GM12878 (cell line): ENCODE measurements at regions of chr2 and their contacts with region 1.

Region 1: DNA sequence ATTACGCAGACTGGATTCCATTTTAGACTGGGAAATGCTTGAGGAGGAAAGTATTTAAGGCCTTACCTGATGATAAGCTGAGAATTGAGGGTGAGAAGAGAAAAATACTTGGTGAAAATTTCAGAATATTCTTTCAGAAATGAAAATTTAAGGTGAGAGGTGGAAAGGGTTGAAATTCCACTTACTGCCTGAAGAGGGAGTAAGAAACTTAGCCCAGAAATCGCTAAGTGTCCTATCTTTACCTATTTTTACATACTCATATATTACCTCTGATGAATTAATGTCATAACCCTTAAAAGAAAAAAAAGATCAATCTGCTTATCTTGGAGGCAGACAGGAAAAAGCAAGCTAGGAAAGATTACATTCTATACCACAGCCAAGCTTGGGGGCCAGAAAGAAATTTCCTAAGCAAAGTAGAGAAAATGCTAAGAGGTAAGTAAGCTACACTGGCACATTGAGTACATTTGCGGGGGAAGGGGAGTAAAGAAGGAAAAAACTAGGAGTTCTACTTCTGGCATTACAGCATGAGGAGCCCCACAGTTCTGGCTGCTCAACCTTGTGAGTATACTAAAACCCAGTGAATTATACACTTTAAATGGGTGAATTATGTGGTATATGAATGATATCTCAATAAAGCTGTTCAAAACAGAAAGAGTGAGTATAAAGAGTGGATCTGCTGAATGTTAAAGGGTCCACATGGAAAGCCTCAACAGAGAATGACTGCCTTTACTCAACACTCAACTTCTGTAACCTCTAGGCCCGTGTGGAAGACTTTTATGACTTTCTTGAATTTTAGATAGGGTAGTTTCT is 33.8 kb downstream of the SMC6 start:
- DNase-seq: no peak
- ATAC-seq: peak; percentile 67
- H3K4me3 ChIP-seq: no peak overlapping the region
- H3K27ac ChIP-seq: no peak overlapping the region
- H3K4me1 ChIP-seq: no peaks in the 10 kb centered on the region
- H3K27me3 ChIP-seq: no peaks in the 10 kb centered on the region
- CTCF ChIP-seq: peak; percentile 59 to 78 (median 75)
- EP300 ChIP-seq: no peak
- POLR2A ChIP-seq: no peak
- RAD21 ChIP-seq: peak; percentile 74

Region 2: DNA sequence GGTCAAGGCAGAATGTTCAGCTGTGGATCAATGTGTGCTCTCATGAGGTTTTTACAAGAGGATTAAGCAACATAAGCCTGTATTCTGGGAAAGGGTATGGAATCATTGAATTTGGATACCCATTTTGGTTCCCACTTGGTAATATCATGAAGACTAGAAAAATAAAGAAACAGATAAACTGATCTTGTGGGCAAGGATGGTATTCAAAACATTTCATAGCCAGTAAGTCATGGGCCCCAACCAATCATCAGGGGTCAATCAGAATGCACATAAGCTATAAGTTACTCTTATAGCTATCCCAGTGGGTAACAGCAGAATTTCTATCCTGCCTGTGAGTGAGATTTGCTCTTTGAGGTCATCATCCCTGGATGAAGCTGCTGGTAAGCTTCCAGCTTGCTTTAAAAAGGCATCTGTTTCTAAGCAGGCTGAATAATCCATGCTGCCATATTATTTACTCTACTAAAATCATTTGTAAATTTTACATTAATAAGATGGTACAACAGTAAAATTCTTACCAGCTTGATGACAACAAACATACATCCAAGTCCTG is 492.8 kb before region 1 on chr2:
- CTCF ChIA-PET with region 1: no interaction called
- POLR2A ChIA-PET with region 1: no interaction called
- RAD21 ChIA-PET with region 1: no interaction called
- SMC1A ChIA-PET with region 1: no interaction called
- in situ Hi-C with region 1: no loop called
- intact Hi-C with region 1: no loop called
- DNase-seq: no peak
- ATAC-seq: no peak
- H3K4me3 ChIP-seq: no peak overlapping the region
- H3K27ac ChIP-seq: no peak overlapping the region
- H3K4me1 ChIP-seq: no peaks in the 10 kb centered on the region
- H3K27me3 ChIP-seq: no peaks in the 10 kb centered on the region
- CTCF ChIP-seq: no peak
- EP300 ChIP-seq: no peak
- POLR2A ChIP-seq: no peak
- RAD21 ChIP-seq: no peak

Region 3: DNA sequence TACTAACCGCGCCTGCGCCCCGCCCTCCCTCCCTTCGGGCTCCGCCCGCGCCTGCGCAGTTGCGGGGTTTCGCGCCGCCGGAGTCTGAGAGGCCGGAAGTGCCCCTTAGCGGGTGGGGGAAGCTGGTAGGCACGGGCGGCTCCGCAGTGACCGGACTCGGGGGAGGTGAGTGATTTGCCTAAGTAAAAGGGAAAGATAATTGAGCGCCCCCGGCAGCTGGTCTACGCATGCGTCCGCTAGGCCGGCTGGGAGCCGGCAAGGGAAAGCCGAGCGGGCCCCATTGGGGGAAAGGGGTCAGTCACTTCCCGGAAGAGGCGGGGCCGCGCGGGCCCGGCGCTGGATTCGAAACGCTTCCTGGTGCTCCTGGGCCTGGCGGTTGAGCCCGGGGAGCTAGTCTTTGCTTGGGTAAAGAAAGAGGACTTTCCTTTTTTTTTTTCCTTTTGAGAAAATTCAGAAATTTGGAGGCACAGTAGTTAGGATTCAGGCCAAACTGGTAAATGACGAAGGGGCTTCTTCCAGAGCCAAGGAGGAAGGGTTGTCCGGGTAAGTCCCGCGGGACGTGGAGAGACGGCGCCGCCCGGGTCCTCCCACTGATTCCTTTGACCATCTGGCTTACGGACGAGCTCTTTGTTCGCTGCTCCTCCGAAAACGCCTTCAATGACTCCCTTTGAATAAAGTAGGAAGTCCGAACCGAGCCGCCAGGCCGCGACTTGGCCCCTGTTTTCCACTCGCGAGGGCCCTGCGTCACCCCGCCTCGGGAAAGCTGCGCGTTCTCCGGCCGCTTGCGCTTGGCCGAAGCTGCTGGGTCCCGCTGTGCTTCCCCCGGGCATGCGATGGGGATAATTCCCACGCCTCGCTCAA is 34.3 kb after region 1 on chr2 and contains the starts of genes GEN1 and SMC6:
- CTCF ChIA-PET with region 1: interaction called, 33 read pairs
- POLR2A ChIA-PET with region 1: no interaction called
- RAD21 ChIA-PET with region 1: interaction called, 7 read pairs
- SMC1A ChIA-PET with region 1: interaction called, 26 read pairs
- in situ Hi-C with region 1: no loop called
- intact Hi-C with region 1: no loop called
- DNase-seq: peak; percentile 83
- ATAC-seq: peak; percentile 80
- H3K4me3 ChIP-seq: peak within 1 kb of the TSS; percentile 91
- H3K27ac ChIP-seq: peak within 1 kb of the TSS; percentile 94
- H3K4me1 ChIP-seq: peaks cover 9% of the 10 kb centered on the region
- H3K27me3 ChIP-seq: no peaks in the 10 kb centered on the region
- CTCF ChIP-seq: no peak
- EP300 ChIP-seq: no peak
- POLR2A ChIP-seq: no peak; the same call in 1 of the 2 replicates
- RAD21 ChIP-seq: no peak
- polyA plus RNA-seq, gene GEN1: 6.0 to 9.4 TPM
- polyA plus RNA-seq, gene SMC6: 12.8 to 18.9 TPM

Region 4: DNA sequence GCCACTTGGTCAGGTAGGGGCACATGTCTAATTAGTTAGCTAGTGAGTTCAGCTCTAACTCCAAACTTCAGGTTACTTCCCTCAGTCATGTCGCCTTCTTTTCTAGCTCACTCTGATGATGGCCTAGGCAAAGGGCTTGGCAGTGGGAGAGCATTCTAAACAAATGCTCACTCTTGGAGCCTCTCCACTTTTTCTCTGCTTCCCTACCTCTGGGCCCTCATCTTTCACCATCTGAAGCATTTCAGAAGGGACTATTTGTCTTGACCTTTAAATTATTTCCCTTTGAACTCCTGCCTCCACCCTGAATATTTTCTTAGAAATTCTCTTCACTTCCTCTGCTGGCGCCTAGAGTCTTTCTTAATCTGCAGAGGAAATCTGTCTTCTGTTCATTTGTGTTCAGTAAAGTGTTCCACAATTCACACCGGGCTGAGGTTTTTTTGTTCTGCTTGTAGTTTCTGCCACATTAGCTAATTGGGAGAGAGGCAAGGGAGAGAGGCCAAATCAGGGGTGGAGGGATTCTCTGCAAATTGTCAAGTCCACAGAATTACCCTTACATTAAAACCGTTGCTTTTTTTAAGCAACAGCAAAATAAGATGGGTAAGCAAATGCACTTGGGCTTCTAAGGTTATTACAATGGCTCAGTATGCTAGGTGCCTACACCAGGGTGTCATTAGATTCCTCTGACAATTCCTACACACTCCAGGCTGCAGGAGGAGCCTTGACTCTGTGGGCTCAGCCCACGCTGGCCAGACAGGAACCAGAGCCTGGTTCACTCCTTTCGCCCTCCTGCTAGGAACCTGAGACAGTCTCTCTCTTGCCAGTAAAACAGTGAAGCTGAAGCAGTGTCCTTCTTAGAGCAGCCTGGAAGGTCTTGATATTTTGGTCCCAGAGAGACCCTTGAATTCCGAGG is 102.0 kb after region 1 on chr2:
- CTCF ChIA-PET with region 1: interaction called, 27 read pairs
- POLR2A ChIA-PET with region 1: no interaction called
- RAD21 ChIA-PET with region 1: interaction called, 5 read pairs
- SMC1A ChIA-PET with region 1: interaction called, 11 read pairs
- in situ Hi-C with region 1: no loop called
- intact Hi-C with region 1: no loop called
- DNase-seq: no peak
- ATAC-seq: peak; percentile 65
- H3K4me3 ChIP-seq: 0 out of 2 replicates have a peak overlapping the region, but pooled peaks have one; percentile 48
- H3K27ac ChIP-seq: peak overlapping the region; percentile 55
- H3K4me1 ChIP-seq: peaks cover 29% of the 10 kb centered on the region
- H3K27me3 ChIP-seq: no peaks in the 10 kb centered on the region
- CTCF ChIP-seq: no peak
- EP300 ChIP-seq: peak; percentile 37 to 40; a peak in 1 of 4 replicates
- POLR2A ChIP-seq: no peak
- RAD21 ChIP-seq: no peak; the same call in 1 of the 2 replicates

Region 5: DNA sequence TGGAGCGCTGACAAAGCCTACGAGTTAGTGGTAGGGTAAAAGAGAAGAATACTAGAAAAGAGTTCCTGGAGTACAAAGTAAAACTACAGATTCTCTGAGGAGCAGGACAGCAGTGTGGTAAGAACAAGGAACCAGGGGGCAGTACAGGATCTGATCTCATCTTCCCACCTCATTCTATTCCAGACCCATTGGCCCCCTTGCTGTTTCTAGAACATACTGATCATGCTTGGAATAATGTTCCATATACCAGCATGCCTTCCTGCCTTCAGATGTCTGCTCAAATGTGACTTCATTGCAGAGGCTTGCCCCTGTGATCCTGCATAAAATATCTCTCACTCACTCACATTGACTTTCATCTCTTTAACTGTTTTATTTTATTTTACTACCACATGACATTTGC is 115.7 kb after region 1 on chr2:
- CTCF ChIA-PET with region 1: interaction called, 130 read pairs
- POLR2A ChIA-PET with region 1: interaction called, 3 read pairs
- RAD21 ChIA-PET with region 1: interaction called, 12 read pairs
- SMC1A ChIA-PET with region 1: interaction called, 86 read pairs
- in situ Hi-C with region 1: loop called (anchors 5 kb)
- intact Hi-C with region 1: loop called (anchors 1 kb)
- DNase-seq: no peak
- ATAC-seq: no peak
- H3K4me3 ChIP-seq: no peak overlapping the region
- H3K27ac ChIP-seq: no peak overlapping the region
- H3K4me1 ChIP-seq: no peaks in the 10 kb centered on the region
- H3K27me3 ChIP-seq: no peaks in the 10 kb centered on the region
- CTCF ChIP-seq: no peak
- EP300 ChIP-seq: no peak
- POLR2A ChIP-seq: no peak
- RAD21 ChIP-seq: no peak

Region 6: GRCh38 chr2:18149645-18150246 is 430.0 kb after region 1 on chr2:
- CTCF ChIA-PET with region 1: interaction called, 7 read pairs
- POLR2A ChIA-PET with region 1: no interaction called
- RAD21 ChIA-PET with region 1: interaction called, 4 read pairs
- SMC1A ChIA-PET with region 1: no interaction called
- in situ Hi-C with region 1: loop called (anchors 10 kb)
- intact Hi-C with region 1: no loop called
- DNase-seq: no peak
- ATAC-seq: peak; percentile 76
- H3K4me3 ChIP-seq: no peak overlapping the region
- H3K27ac ChIP-seq: no peak overlapping the region
- H3K4me1 ChIP-seq: no peaks in the 10 kb centered on the region
- H3K27me3 ChIP-seq: no peaks in the 10 kb centered on the region
- CTCF ChIP-seq: peak; percentile 59 to 67 (median 66)
- EP300 ChIP-seq: no peak
- POLR2A ChIP-seq: no peak
- RAD21 ChIP-seq: peak; percentile 60

Region 7: DNA sequence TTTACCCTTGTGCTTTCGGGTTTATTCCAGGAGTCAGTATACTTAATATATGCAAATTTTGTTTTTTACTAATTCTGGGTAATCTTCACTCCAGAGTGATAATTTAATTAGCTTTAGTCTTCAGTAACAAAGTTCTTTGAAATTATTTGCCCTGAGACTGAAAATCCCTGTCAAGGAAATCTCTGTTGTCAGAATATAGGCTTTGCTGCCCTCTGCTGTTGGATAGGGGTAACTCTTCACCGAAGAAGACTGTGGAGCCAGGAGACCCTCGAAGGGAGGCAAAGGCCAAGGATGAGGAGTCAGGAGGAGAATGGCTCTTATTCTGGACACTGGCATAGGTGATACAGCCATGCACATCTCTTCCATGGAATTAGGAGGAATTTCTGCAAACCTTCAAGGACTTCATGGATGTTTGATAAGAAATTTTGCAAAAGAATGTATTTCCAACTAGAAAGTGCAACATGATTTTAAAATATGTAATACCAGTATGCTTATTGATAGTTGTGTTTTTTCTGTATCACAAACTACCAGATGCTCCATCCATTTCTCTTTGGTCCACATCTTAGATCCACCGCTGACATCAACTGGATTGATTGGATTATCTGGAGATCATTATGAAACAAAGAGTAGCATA is 658.4 kb after region 1 on chr2:
- CTCF ChIA-PET with region 1: no interaction called
- POLR2A ChIA-PET with region 1: no interaction called
- RAD21 ChIA-PET with region 1: no interaction called
- SMC1A ChIA-PET with region 1: no interaction called
- in situ Hi-C with region 1: no loop called
- intact Hi-C with region 1: loop called (anchors 5 kb)
- DNase-seq: no peak
- ATAC-seq: peak; percentile 86
- H3K4me3 ChIP-seq: no peak overlapping the region
- H3K27ac ChIP-seq: no peak overlapping the region
- H3K4me1 ChIP-seq: no peaks in the 10 kb centered on the region
- H3K27me3 ChIP-seq: peaks cover 0 to 3% of the 10 kb centered on the region in 2 experiments; a peak in 1 of 4 replicates
- CTCF ChIP-seq: peak; percentile 62 to 79 (median 75)
- EP300 ChIP-seq: no peak
- POLR2A ChIP-seq: no peak
- RAD21 ChIP-seq: peak; percentile 58